ENCODE measurements at regions of chr7 and their contacts with region 1.

Region 1: GRCh38 chr7:120799813-120800475 is 58.0 kb downstream of the TSPAN12 start:
- DNase-seq: no peak
- H3K4me3 ChIP-seq: no peak overlapping the region
- H3K27ac ChIP-seq: no peak overlapping the region
- H3K4me1 ChIP-seq: no peaks in the 10 kb centered on the region
- H3K27me3 ChIP-seq: peaks cover 9% of the 10 kb centered on the region; the same call in 1 of the 2 replicates
- CTCF ChIP-seq: no peak
- EP300 ChIP-seq: no peak
- RAD21 ChIP-seq: no peak

Region 2: GRCh38 chr7:121107923-121108498 is 308.1 kb after region 1 on chr7:
- CTCF ChIA-PET with region 1: interaction called, 58 read pairs
- POLR2A ChIA-PET with region 1: no interaction called
- DNase-seq: peak; percentile 45
- H3K4me3 ChIP-seq: no peak overlapping the region
- H3K27ac ChIP-seq: no peak overlapping the region
- H3K4me1 ChIP-seq: no peaks in the 10 kb centered on the region
- H3K27me3 ChIP-seq: no peaks in the 10 kb centered on the region
- CTCF ChIP-seq: peak; percentile 99
- EP300 ChIP-seq: no peak
- RAD21 ChIP-seq: peak; percentile 95

Region 3: GRCh38 chr7:121228779-121229178 is 428.8 kb after region 1 on chr7:
- CTCF ChIA-PET with region 1: no interaction called
- POLR2A ChIA-PET with region 1: no interaction called
- DNase-seq: no peak
- H3K4me3 ChIP-seq: no peak overlapping the region
- H3K27ac ChIP-seq: no peak overlapping the region
- H3K4me1 ChIP-seq: no peaks in the 10 kb centered on the region
- H3K27me3 ChIP-seq: no peaks in the 10 kb centered on the region
- CTCF ChIP-seq: no peak
- EP300 ChIP-seq: no peak
- RAD21 ChIP-seq: no peak

Measured in SK-N-SH (cell line).